Left cardiac atrium (tissue), 4 donors: ENCODE measurements at regions of chr7 and their contacts with region 1.

Region 1: DNA sequence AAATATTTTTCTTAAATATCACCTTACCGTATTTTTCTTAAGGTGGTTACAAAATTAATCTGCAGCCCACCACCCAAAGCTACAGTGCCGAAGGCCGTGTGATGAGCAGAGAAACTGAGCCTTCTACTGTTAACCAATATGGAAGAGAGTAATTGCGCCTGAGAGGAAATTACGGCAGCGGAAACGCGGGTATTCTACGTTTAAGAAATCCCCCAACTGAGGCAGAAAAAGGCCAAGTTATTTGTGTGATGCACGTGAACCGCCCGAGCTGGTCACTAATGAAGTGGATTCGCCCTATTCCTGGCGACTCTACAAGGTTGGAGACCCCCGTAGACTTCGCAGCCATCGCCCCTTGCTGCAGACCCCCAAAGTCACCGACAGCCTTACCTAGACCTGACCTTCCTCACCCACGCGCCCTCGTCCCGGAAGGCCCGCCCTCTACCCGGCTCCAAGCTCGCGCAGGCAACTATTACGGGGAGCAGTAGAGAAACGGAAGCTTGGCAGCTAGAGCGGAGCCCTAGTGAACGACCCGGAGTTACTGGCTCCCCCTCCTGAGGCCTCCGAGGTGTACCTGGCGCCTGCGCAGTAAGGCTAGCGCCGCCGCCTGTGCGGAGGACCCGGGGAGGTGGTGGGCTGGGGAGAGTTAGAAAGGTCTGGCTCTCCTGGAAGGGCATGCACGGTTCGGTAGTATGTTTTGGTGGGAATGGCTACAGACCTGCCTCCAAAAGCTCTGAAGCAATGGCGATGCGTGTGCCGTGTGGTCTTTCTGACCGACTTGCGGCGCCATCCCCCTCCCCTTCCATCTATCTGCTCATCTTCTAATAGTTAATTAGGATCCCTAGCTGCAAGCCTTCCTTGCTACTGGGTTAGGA is at the start of gene MRPS33:
- DNase-seq: peak; percentile 96
- ATAC-seq: peak; percentile 100
- total RNA-seq, gene MRPS33: 78.4 to 91.3 TPM

Region 2: GRCh38 chr7:140673063-140673773 is 341.5 kb before region 1 on chr7:
- intact Hi-C with region 1: loop called in 1 of 2 experiments (anchors 10 kb)
- DNase-seq: peak; percentile 60
- ATAC-seq: peak; percentile 62 to 73

Region 3: DNA sequence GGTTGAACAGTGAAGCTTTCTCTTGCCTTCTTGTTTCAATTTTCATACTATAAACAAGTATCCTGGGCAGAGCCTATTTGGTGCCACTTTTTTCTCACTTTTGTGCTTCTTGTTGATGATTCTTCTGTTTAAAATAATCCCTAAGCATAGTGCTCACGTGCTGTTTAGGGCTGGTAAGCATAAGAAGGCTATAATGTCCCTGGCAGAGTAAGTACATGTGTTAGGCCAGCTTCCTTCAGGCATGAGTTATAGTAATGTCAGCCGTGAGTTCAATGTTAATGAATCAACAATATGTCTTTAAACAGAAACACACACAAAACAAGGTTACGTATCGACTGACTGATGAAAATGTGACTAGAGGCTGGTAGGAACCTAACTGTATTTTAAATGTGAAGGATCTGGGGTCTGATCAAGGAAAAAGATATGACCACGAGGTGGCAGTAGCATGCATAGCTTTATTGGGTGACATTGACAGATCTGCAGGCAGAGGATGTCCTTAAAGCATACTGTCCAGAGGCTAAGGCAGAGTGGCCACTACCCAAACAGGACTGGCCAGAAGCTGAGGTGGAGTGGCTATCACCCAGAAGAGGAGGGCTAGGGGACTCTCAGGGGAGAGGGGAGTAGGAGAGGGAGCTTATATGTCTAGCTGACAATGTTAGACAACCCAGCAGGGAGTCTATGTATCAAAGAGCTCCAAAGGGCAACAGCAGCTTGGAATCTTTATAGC is 203.8 kb before region 1 on chr7:
- intact Hi-C with region 1: loop called (anchors 2 to 5 kb)
- DNase-seq: peak; percentile 21
- ATAC-seq: peak; percentile 86 to 93

Region 4: DNA sequence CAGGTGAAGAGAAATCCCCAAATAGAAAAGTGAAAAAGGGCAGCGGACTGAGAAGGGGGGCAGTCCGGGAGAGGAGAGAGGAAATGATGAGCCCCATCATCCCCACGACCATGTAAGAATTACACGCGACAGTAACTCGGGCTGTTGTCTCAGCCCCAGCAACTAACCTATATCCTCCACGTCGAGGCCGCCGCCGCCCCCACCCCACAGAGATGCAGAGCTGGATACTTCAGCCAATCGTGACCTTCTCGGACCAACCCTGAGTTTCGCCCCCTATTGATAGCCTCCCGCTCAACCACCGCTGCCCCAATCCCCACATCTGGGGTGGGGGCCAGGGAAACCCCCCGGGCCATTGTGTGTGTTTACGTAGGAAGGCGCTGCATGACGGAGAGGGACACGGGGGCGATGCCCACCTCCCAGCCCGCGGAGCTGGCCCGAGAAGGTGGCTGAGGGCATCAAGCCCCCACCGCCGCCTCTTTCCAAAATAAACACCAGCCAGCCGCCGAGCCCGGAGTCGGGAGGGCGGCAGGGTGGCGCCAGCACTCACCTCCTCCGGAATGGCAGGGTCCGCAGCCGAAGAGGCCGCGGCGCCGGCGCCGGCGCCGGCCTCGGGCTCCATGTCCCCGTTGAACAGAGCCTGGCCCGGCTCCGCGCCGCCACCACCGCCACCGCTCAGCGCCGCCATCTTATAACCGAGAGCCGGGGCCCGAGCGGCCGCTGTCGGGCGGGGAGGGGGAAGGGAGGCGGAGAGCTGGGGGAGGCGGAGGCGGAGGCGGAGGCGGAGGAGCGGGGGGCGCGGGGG is 90.5 kb before region 1 on chr7:
- intact Hi-C with region 1: loop called in 1 of 2 experiments (anchors 10 kb)
- DNase-seq: peak; percentile 83
- ATAC-seq: peak; percentile 84 to 90